AG04449 (cell line): ENCODE measurements at regions of chr7 and their contacts with region 1.

Region 1: GRCh38 chr7:152330827-152331226 is 105.0 kb downstream of the KMT2C start:
- DNase-seq: peak; percentile 7
- H3K4me3 ChIP-seq: no peak overlapping the region
- CTCF ChIP-seq: no peak

Region 2: DNA sequence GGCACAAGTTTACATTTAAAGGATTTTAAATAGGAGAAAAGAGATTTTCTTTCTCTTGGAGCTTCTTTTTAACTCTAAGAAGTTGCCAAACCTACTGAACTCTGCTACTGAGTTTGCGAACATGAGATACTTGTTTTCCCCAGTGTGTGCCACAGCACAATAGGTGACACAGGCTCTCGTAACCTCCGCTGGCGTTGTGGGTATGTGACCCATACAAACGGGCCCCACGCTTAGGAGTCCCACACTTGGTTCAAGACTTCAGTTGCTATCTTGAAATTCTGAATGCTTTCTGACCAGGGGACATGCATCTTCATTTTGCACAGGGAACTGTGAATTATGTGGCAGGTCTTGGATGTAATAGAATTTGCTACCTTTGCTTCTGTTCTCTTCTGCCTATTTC is 376.9 kb after region 1 on chr7:
- CTCF ChIA-PET with region 1: interaction called, 16 read pairs
- POLR2A ChIA-PET with region 1: no interaction called
- DNase-seq: no peak
- H3K4me3 ChIP-seq: no peak overlapping the region
- CTCF ChIP-seq: no peak